Esophagus muscularis mucosa (tissue), 4 donors: ENCODE measurements at regions of chr16 and their contacts with region 1.

Region 1: GRCh38 chr16:29961479-29962343 is at the start of gene TMEM219:
- DNase-seq: peak; percentile 96
- H3K4me3 ChIP-seq: peak within 1 kb of the TSS; percentile 73 to 95 (median 80)
- H3K27ac ChIP-seq: peak within 1 kb of the TSS; percentile 92 to 95 (median 94)
- H3K4me1 ChIP-seq: peaks cover 8 to 34% (median 25%) of the 10 kb centered on the region in 4 donors
- H3K27me3 ChIP-seq: no peaks in the 10 kb centered on the region
- CTCF ChIP-seq: peak; percentile 33 to 59 (median 59)
- EP300 ChIP-seq: no peak
- POLR2A ChIP-seq: peak; percentile 26
- total RNA-seq, gene TMEM219: 96.8 to 114 (median 105) TPM

Region 2: DNA sequence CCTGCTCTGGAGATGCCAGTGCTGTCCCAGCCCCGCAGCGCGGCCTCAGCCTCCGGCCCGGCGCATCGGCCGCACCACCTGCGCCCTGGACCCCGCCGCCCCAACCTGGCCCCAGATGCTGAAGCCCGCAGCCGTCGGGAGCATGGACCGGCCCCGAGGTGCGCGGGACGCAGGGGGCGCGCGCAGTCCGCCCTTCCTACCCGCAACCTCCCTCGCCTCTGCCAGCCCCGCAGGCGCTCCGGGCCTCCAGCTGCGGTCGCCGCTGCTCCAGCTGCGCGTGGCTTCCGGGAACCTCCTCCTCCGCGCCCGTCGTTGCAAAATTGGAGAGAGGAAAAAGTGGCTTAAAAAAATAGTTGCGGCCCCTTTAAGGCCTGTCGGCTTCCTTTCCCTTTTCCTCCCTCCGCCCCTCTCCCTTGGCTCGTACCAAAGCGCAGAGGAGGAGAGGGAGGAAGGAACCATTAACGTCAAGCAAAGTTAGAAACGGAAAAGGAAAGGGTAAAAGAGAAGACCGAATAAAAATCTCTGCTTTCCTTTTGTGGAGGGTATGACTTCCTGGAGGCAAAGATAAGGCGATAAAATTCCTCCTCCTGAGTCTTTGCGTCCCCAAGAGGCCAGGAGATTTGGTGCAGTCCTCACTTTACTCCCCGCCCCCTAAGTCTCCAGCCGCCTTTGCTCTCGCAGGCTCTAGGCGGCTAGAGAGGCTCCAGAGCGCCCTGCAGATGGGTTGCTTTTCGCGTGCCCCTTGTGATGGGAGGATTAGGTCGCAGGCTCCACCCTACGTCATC is 98.6 kb before region 1 on chr16 and contains the start of gene CDIPT:
- intact Hi-C with region 1: no loop called
- DNase-seq: peak; percentile 97
- H3K4me3 ChIP-seq: peak within 1 kb of the TSS; percentile 67 to 99 (median 78)
- H3K27ac ChIP-seq: peak within 1 kb of the TSS; percentile 85 to 94 (median 86)
- H3K4me1 ChIP-seq: peaks cover 17 to 29% (median 26%) of the 10 kb centered on the region in 4 donors
- H3K27me3 ChIP-seq: no peaks in the 10 kb centered on the region
- CTCF ChIP-seq: peak; percentile 52 to 84 (median 63)
- EP300 ChIP-seq: no peak
- POLR2A ChIP-seq: peak; percentile 2
- total RNA-seq, gene CDIPT: 105 to 178 (median 141) TPM

Region 3: DNA sequence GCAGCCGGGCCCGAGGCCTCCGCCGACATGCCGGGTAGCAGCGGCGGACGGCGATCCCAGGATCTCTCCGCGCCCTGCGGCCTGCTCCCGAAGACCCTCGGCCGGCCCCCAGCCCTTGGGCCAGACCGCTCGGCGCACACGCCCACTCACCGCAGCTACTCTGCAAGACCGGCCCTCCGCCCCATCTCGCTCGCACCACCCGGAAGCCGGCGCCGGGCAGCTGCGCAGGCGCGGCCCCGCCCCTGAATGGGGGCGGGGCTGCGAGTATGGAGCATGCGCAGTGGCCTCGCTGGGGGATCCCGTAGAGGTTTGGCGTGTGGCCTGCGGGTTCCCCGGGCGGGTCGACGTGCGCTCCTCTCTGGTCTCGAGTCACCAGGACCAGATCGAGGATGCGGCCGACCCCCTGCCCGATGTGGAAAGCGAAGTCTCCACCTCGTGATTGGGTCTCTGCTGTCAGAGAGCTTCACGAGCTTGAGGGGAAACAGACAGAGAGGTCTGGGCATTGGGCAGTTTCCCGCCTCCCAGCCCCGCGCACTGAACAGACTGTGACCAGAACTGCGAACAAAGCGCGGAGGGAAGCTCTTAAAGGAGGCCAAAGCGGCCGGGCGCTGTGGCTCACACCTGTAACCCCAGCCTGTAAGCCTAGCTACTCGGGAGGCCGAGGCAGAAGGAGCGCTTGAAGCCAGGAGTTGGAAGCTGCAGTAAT is 35.6 kb before region 1 on chr16 and contains the start of gene KCTD13:
- intact Hi-C with region 1: loop called (anchors 5 kb)
- DNase-seq: peak; percentile 95
- H3K4me3 ChIP-seq: peak within 1 kb of the TSS; percentile 64 to 99 (median 90)
- H3K27ac ChIP-seq: peak within 1 kb of the TSS; percentile 82 to 91 (median 88)
- H3K4me1 ChIP-seq: peaks cover 19 to 38% (median 27%) of the 10 kb centered on the region in 4 donors
- H3K27me3 ChIP-seq: no peaks in the 10 kb centered on the region
- CTCF ChIP-seq: no peak
- EP300 ChIP-seq: no peak
- POLR2A ChIP-seq: peak; percentile 72
- total RNA-seq, gene KCTD13: 14.4 to 25.7 (median 18.8) TPM